GM12878 (cell line): ENCODE measurements at regions of chrX and their contacts with region 1.

Region 1: DNA sequence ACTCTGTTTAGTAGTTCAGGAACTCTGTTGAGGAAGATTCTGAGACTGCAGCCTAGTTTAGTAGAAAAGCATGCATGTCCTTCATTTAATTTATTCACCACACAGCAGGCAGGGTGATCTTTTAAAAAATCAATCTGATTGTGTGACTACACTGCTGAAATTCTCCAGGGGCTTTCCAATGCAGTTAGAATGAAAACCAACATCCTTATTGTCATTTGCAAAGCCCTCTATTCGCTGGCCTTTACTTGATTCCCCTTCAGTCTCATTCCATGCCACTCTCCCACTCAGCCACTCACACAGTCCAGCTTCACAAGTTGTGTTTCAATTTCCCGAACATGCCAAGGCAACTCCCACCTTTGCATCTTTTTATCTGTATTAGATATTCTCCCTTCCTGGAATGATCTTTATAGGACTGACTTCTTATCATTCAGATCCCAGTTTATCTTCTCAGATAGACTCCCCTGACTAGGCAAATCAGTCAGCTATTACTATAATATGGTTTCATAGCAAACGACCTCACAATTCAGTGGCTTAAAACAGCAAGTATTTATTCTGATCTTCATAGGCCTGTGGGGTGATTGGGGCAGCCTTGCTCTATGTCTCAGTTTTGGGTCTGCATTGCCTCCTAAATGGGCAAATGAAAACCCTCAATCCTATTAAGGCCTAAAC is 21.3 kb upstream of the FTHL17 start:
- DNase-seq: peak; percentile 30
- ATAC-seq: peak; percentile 86
- H3K4me3 ChIP-seq: no peak overlapping the region
- H3K27ac ChIP-seq: peak overlapping the region; percentile 54
- H3K4me1 ChIP-seq: peaks cover 8% of the 10 kb centered on the region
- H3K27me3 ChIP-seq: no peaks in the 10 kb centered on the region
- CTCF ChIP-seq: no peak
- EP300 ChIP-seq: peak in 1 of 2 experiments; percentile 49; a peak in 1 of 4 replicates
- POLR2A ChIP-seq: no peak
- RAD21 ChIP-seq: no peak

Region 2: GRCh38 chrX:31070057-31070468 is 23.0 kb before region 1 on chrX:
- CTCF ChIA-PET with region 1: no interaction called
- POLR2A ChIA-PET with region 1: no interaction called
- RAD21 ChIA-PET with region 1: interaction called, 3 read pairs
- SMC1A ChIA-PET with region 1: interaction called, 5 read pairs
- in situ Hi-C with region 1: no loop called
- intact Hi-C with region 1: loop called (anchors 2 kb)
- DNase-seq: peak; percentile 38
- ATAC-seq: peak; percentile 89
- H3K4me3 ChIP-seq: no peak overlapping the region
- H3K27ac ChIP-seq: peak overlapping the region; percentile 0; the same call in 1 of the 2 replicates
- H3K4me1 ChIP-seq: peaks cover 16% of the 10 kb centered on the region; the same call in 1 of the 2 replicates
- H3K27me3 ChIP-seq: no peaks in the 10 kb centered on the region
- CTCF ChIP-seq: no peak
- EP300 ChIP-seq: 0 out of 4 replicates have a peak, but pooled peaks of 1 of the 2 experiments have one; percentile 11
- POLR2A ChIP-seq: no peak
- RAD21 ChIP-seq: no peak